ENCODE measurements at regions of chr3 and their contacts with region 1.

Region 1: GRCh38 chr3:170414202-170414663 is 4.4 kb upstream of the CLDN11 start:
- DNase-seq: peak in 6 of 9 donors; percentile 25 to 58 (median 48)
- ATAC-seq: peak; percentile 75
- H3K4me3 ChIP-seq: no peak overlapping the region
- H3K4me3 Mint-ChIP-seq: no peak overlapping the region
- H3K27ac ChIP-seq: no peak overlapping the region
- H3K27ac Mint-ChIP-seq: no peak overlapping the region
- H3K4me1 ChIP-seq: peaks cover 4 to 7% of the 10 kb centered on the region in 2 donors
- H3K4me1 Mint-ChIP-seq: peaks cover 5 to 15% (median 7%) of the 10 kb centered on the region in 7 donors
- H3K27me3 ChIP-seq: peaks cover 0 to 8% of the 10 kb centered on the region in 2 donors
- H3K27me3 Mint-ChIP-seq: peaks cover 14 to 40% (median 17%) of the 10 kb centered on the region in 5 donors

Region 2: DNA sequence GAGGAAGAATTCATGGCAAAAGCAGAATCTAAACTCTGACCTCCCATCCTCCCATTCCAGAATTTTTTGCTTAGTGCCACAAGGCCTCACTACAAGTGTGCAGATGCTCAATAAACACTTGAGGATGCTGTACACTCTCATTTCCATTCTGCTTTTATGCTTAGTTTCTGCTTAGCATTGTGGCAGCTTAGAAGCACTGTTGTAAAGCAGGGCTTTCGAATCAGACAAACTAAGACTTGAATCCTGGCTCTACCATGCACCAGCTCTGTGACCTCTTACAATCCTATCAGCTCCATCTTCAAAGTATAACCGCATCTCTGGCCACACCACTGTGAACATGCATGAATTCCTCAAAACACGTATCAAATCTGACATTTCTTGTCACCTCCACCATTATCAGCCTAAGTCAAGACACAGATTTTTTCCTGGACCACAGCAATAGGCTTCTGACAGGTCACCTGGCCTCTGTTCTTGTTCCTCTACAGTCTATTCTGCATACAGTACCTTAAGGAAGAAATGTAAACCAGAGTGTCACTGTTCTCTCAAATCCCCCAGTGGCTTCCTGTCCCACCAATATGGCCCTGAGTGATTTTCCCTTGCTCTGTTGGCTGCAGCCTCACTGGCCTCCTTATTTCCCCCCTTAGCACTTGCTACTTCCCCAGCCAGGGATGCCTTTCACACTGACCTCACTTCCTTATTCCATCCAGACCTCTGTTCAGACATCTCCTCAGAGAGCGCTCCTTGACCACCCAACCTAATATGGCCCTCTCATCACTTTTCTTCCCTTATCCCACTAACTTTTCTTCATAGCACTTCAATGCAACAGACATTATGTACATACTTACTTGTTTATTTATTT is 224.6 kb before region 1 on chr3:
- CTCF ChIA-PET with region 1: no interaction called
- POLR2A ChIA-PET with region 1: no interaction called
- intact Hi-C with region 1: loop called (anchors 1 to 2 kb)
- DNase-seq: no peak
- ATAC-seq: peak; percentile 28
- H3K4me3 ChIP-seq: no peak overlapping the region
- H3K4me3 Mint-ChIP-seq: peak overlapping the region in 5 of 10 donors; percentile 10 to 37 (median 23)
- H3K27ac ChIP-seq: no peak overlapping the region
- H3K27ac Mint-ChIP-seq: peak overlapping the region in 2 of 9 donors; percentile 14 to 51
- H3K4me1 ChIP-seq: peaks cover 0 to 4% of the 10 kb centered on the region in 2 donors
- H3K4me1 Mint-ChIP-seq: peaks cover 0 to 14% (median 12%) of the 10 kb centered on the region in 7 donors
- H3K27me3 ChIP-seq: no peaks in the 10 kb centered on the region
- H3K27me3 Mint-ChIP-seq: peaks cover 0 to 21% (median 4%) of the 10 kb centered on the region in 5 donors

Region 3: GRCh38 chr3:170499565-170500156 is 85.4 kb after region 1 on chr3:
- CTCF ChIA-PET with region 1: no interaction called
- POLR2A ChIA-PET with region 1: no interaction called
- intact Hi-C with region 1: no loop called
- DNase-seq: peak in 1 of 9 donors; percentile 9
- ATAC-seq: no peak
- H3K4me3 ChIP-seq: no peak overlapping the region
- H3K4me3 Mint-ChIP-seq: no peak overlapping the region
- H3K27ac ChIP-seq: no peak overlapping the region
- H3K27ac Mint-ChIP-seq: no peak overlapping the region
- H3K4me1 ChIP-seq: no peaks in the 10 kb centered on the region
- H3K4me1 Mint-ChIP-seq: no peaks in the 10 kb centered on the region
- H3K27me3 ChIP-seq: no peaks in the 10 kb centered on the region
- H3K27me3 Mint-ChIP-seq: peaks cover 6 to 17% (median 9%) of the 10 kb centered on the region in 5 donors

Region 4: DNA sequence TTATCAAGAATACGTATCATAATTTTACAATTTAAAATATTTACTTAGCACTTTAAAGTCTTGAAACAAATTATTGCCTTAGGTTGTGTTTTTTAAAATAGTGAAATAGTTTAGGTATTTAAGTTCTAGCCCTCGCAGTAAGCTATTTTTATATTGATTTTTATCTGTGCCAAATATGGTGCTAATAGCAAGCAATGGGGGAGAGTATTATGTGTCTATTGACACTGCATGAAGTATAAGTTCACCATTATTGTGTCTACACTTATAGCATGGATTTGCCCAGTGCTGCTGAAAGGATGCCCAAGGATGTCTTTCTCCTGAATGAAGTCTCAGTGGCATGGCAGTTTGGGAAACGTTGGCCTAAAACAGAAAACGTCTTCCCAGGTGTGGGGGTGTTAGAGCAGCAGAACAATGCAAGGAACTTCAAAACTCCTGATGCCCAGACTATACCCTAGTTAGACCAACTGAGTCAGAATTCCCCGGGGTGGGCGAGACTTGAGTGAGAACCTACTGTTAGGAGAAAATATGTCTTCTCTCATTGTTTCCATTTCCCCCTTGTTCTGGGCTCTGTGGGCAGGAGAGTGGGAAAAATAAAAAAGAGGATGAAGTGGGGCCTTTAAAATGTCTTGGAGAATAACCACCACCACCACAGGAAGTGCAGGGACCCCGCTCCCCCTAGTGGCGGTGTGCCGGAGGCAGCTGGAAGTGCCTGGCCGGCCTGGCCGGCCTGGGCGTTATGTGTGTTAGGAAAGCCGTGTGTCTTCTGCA is 275.8 kb after region 1 on chr3:
- CTCF ChIA-PET with region 1: interaction called, 5 read pairs
- POLR2A ChIA-PET with region 1: no interaction called
- intact Hi-C with region 1: loop called in 1 of 2 experiments (anchors 1 kb)
- DNase-seq: peak in 7 of 9 donors; percentile 6 to 47 (median 18)
- ATAC-seq: no peak
- H3K4me3 ChIP-seq: no peak overlapping the region
- H3K4me3 Mint-ChIP-seq: no peak overlapping the region
- H3K27ac ChIP-seq: no peak overlapping the region
- H3K27ac Mint-ChIP-seq: no peak overlapping the region
- H3K4me1 ChIP-seq: no peaks in the 10 kb centered on the region
- H3K4me1 Mint-ChIP-seq: no peaks in the 10 kb centered on the region
- H3K27me3 ChIP-seq: no peaks in the 10 kb centered on the region
- H3K27me3 Mint-ChIP-seq: peaks cover 0 to 1% (median 0%) of the 10 kb centered on the region in 5 donors

Region 5: DNA sequence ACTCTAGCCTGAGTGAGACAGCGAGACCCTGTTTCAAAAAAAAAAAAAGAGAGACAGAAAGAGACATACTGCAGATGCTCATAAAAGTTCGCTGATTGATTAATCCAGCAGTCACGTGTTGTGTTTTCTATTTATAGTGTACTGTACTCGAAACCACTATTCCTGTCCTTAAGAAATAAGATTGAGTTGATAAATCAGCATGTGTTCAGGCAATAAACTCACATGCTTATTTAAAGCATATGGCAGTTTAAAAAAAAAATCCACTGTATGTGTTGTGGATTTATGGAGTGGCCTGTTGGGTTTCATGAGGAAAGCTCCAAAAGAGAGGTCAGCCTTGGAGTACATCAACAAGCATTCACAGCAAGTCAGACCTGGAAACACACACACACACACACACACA is 438.1 kb after region 1 on chr3:
- CTCF ChIA-PET with region 1: no interaction called
- POLR2A ChIA-PET with region 1: no interaction called
- intact Hi-C with region 1: loop called in 1 of 2 experiments (anchors 5 kb)
- DNase-seq: no peak
- ATAC-seq: no peak
- H3K4me3 ChIP-seq: no peak overlapping the region
- H3K4me3 Mint-ChIP-seq: no peak overlapping the region
- H3K27ac ChIP-seq: no peak overlapping the region
- H3K27ac Mint-ChIP-seq: no peak overlapping the region
- H3K4me1 ChIP-seq: no peaks in the 10 kb centered on the region
- H3K4me1 Mint-ChIP-seq: peaks cover 0 to 2% (median 0%) of the 10 kb centered on the region in 7 donors
- H3K27me3 ChIP-seq: no peaks in the 10 kb centered on the region
- H3K27me3 Mint-ChIP-seq: peaks cover 4 to 21% (median 6%) of the 10 kb centered on the region in 5 donors

Region 6: DNA sequence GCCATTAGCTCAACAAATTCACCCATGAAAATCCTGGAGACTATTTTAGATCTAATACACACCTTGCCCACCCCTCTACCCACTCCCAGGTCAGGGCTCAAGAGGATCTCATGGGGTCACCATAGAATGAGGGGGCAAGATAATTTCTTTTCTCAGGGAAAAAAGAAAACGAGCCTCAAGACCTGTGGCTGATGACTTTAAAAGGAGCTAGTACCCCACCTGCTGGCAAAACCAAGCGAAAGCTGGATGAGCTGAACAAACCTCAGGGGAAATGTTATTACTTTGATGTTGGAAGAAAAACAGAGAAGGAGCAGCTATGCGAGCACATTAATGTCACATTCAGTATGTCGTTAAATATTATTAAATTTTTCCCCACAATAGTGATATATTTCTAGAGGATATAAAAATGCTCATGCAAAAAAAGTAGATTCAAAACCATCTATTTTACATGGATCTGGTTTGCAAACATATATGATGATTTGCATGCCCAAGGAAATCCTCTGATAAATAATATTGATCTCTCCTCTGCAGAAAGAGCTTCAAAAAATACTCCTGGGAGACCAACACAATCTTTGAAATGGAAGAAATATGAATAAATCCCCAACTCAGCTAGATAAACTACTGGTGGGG is 1358.3 kb after region 1 on chr3:
- CTCF ChIA-PET with region 1: interaction called, 9 read pairs
- POLR2A ChIA-PET with region 1: no interaction called
- intact Hi-C with region 1: loop called in 1 of 2 experiments (anchors 10 kb)
- DNase-seq: peak in 7 of 9 donors; percentile 6 to 55 (median 36)
- ATAC-seq: peak; percentile 58
- H3K4me3 ChIP-seq: no peak overlapping the region
- H3K4me3 Mint-ChIP-seq: no peak overlapping the region
- H3K27ac ChIP-seq: no peak overlapping the region
- H3K27ac Mint-ChIP-seq: no peak overlapping the region
- H3K4me1 ChIP-seq: no peaks in the 10 kb centered on the region
- H3K4me1 Mint-ChIP-seq: peaks cover 0 to 9% (median 0%) of the 10 kb centered on the region in 7 donors
- H3K27me3 ChIP-seq: no peaks in the 10 kb centered on the region
- H3K27me3 Mint-ChIP-seq: peaks cover 0 to 29% (median 0%) of the 10 kb centered on the region in 5 donors

Measured in naive thymus-derived CD4-positive, alpha-beta T cell (primary cell).